Activated T-helper 2 cell treated with anti-CD3 and anti-CD28 coated beads, Interferon-gamma antibody, Interleukin-2, Interleukin-4, amounts not matched to agents 10 μg/mL and 5 μg/mL and 100 μg/mL, durations not matched to agents 14 hours and 24 hours and 36 hours (primary cell): ENCODE measurements at regions of chr16 and their contacts with region 1.

Region 1: GRCh38 chr16:31179747-31180459 is at the start of gene FUS:
- DNase-seq: peak; percentile 88
- H3K4me3 Mint-ChIP-seq: peak within 1 kb of the TSS; percentile 98
- H3K27ac Mint-ChIP-seq: peak within 1 kb of the TSS; percentile 95
- H3K4me1 Mint-ChIP-seq: peaks cover 38% of the 10 kb centered on the region
- H3K27me3 Mint-ChIP-seq: no peaks in the 10 kb centered on the region
- total RNA-seq, gene FUS: 874 and 904 TPM in 2 replicates

Region 2: DNA sequence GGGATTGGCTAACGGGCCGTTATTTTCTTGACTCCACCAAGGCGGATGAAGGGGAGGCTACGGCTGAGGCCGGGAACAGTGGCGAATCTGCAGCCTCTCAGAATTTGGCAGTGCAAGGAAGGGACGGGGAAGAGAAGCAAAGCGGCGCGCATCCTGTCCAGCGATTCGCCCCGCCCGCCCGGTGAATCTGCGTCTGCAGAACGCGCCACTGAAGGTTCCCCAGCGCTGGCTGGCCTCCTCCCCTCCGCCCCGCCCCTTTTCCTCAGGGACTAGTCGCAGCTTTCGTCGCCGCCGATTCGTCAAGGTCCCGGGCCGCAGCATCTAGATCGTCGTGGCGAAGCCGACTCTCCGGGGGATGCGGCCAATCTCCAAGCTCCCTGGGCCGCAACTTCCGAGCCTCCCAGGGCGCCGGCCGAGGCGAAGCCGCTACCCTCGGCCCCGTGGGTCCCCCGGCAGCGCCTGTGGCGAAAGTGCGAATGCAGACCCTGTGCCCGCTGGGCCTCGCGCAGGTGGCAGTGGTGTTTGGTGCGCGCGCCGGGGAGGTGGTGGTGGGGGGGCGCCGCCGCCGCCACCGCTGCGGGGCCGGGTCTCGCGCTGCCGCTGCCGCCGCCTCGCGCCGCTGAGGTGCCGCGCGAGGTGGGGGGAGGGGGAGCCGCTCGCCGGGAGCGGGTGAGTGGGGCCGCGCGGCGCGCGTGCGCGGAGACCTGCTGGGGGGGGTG is 222.3 kb before region 1 on chr16 and contains the start of gene SETD1A:
- intact Hi-C with region 1: loop called (anchors 10 kb)
- DNase-seq: peak; percentile 94
- H3K4me3 Mint-ChIP-seq: peak within 1 kb of the TSS; percentile 95
- H3K27ac Mint-ChIP-seq: peak within 1 kb of the TSS; percentile 99
- H3K4me1 Mint-ChIP-seq: peaks cover 26% of the 10 kb centered on the region
- H3K27me3 Mint-ChIP-seq: no peaks in the 10 kb centered on the region
- total RNA-seq, gene SETD1A: 28.9 TPM in 2 replicates

Region 3: GRCh38 chr16:31117391-31118197 is 62.3 kb before region 1 on chr16 and contains the start of gene KAT8:
- intact Hi-C with region 1: loop called (anchors 5 kb)
- DNase-seq: peak; percentile 97
- H3K4me3 Mint-ChIP-seq: peak within 1 kb of the TSS; percentile 86
- H3K27ac Mint-ChIP-seq: peak within 1 kb of the TSS; percentile 75
- H3K4me1 Mint-ChIP-seq: peaks cover 16% of the 10 kb centered on the region
- H3K27me3 Mint-ChIP-seq: no peaks in the 10 kb centered on the region
- total RNA-seq, gene KAT8: 60.5 and 61.2 TPM in 2 replicates